A673 (cell line): ENCODE measurements at regions of chr17 and their contacts with region 1.

Region 1: DNA sequence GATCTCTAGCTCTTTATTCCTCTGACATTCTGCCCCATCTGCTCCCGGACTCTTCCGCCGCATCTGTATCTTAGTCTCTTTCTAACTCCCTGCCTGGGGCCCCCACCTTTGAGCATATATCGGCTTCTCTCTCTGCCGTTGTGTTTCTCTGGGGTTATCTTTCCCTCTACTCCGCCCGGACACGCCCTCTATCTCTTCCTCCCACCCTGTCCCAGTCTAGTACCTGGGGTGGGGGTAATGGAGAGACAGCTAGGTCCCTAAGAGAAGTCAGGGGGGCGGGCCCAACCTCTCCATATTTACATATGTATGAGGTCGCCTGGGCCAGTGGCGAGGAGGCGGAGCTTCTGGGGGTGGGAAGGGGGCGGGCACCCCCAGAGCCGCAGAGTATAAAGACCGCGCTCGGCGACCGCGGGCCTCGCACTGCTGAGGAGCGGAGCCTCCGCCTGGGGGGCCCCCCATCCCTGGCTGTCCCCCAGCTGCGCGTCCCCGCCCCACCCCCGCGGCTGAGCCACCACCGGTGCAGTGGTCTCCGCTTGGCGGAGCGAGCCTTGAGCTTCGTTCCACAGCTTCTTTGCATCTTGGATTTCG is at the start of gene ATP1B2:
- DNase-seq: peak; percentile 84
- H3K4me3 ChIP-seq: peak within 1 kb of the TSS; percentile 66
- H3K27ac ChIP-seq: no peak within 1 kb of the TSS
- H3K4me1 ChIP-seq: no peaks in the 10 kb centered on the region
- H3K27me3 ChIP-seq: peaks cover 14% of the 10 kb centered on the region
- CTCF ChIP-seq: no peak
- total RNA-seq, gene ATP1B2: 3.5 and 5.9 TPM in 2 replicates

Region 2: DNA sequence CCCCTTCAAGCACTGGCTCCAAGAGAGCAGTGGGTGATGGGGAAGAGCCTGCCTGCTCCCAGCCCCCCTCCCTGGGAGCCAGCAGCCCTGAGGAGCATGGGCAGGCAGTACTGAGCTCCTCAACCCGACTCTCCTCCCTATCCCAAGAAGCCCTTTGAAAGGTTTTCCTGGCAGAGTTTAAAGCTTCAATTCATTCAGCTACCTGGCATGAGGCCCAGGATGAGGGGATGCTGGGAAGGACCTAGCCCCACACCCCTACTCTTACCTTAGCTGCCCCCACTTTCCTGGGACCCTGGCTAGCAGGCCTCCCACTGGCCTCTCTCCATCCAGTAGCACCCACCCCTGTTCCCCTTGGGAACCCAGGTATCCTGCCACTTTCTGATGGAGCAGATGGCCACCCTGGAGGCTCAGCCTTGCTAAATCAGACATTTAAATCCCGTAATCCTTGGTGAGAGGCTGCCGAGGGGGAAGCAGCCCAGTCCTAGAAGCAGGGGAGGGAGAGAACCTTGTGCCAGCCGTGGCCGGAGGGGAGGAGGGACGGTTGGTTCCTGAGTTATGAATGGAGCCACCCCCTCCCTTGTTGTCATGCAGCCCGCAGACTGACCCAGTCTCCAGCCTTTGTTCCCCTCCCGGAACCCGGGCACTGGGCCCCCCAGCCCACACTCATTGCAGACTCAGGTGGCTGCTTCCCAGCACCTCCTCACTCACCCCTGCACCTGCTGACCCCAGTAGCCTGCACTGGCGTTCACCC is 17.2 kb after region 1 on chr17:
- CTCF ChIA-PET with region 1: interaction called, 4 read pairs
- POLR2A ChIA-PET with region 1: interaction called, 10 read pairs
- intact Hi-C with region 1: no loop called
- DNase-seq: no peak
- H3K4me3 ChIP-seq: no peak overlapping the region
- H3K27ac ChIP-seq: no peak overlapping the region
- H3K4me1 ChIP-seq: no peaks in the 10 kb centered on the region
- H3K27me3 ChIP-seq: no peaks in the 10 kb centered on the region
- CTCF ChIP-seq: no peak

Region 3: GRCh38 chr17:7716901-7717755 is 66.5 kb after region 1 on chr17 and contains the start of gene DNAH2:
- CTCF ChIA-PET with region 1: no interaction called
- POLR2A ChIA-PET with region 1: interaction called, 45 read pairs
- intact Hi-C with region 1: no loop called
- DNase-seq: peak; percentile 97
- H3K4me3 ChIP-seq: peak within 1 kb of the TSS; percentile 61
- H3K27ac ChIP-seq: no peak within 1 kb of the TSS
- H3K4me1 ChIP-seq: peaks cover 18% of the 10 kb centered on the region
- H3K27me3 ChIP-seq: no peaks in the 10 kb centered on the region
- CTCF ChIP-seq: peak; percentile 57
- total RNA-seq, gene DNAH2: 0.15 and 0.24 TPM in 2 replicates